ENCODE measurements at regions of chr3 and their contacts with region 1.

Region 1: DNA sequence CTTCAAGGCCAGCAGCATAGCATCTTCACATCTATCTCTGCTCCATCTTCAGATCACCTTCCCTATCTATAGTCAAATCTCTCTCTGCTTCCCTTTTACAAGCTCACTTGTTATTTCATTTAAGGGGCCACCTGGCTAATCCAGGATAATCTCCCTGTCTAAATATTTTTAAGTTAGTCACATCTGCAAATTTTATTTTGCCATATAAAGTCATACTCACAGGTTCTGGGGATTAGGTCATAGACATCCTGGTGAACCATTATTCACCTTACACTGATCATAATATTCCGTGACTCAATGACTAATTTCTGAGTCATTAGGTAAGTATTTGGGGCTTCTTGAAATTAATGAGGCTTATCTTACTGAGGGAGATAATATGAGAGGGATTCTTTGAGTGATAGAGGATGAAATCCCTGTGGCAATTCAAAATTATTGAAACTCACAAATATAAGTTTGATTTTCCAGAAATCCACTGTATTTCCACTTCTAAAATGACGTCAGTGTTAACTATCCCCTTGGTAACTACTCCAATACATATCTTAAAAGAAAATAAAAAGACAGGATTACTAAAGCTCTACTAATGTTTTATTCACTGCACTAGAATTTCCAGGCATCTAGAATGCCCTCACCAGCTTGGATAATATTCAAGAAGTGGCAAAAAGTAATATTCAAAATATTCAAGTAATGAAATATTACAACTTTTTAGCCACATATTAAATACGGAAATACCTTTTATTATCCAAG is 93.7 kb upstream of the RBMS3 start:
- DNase-seq: peak; percentile 99
- ATAC-seq: peak; percentile 79
- H3K4me3 ChIP-seq: no peak overlapping the region; the same call in 1 of the 2 replicates
- H3K27ac ChIP-seq: peak overlapping the region; percentile 98
- H3K4me1 ChIP-seq: peaks cover 45% of the 10 kb centered on the region
- H3K27me3 ChIP-seq: no peaks in the 10 kb centered on the region
- CTCF ChIP-seq: no peak

Region 2: GRCh38 chr3:28951773-28952556 is 235.2 kb before region 1 on chr3:
- CTCF ChIA-PET with region 1: interaction called, 3 read pairs
- POLR2A ChIA-PET with region 1: no interaction called
- intact Hi-C with region 1: loop called (anchors 1 kb)
- DNase-seq: peak; percentile 77
- ATAC-seq: peak; percentile 97
- H3K4me3 ChIP-seq: no peak overlapping the region; the same call in 1 of the 2 replicates
- H3K27ac ChIP-seq: peak overlapping the region; percentile 71
- H3K4me1 ChIP-seq: peaks cover 20% of the 10 kb centered on the region
- H3K27me3 ChIP-seq: no peaks in the 10 kb centered on the region
- CTCF ChIP-seq: no peak

Region 3: DNA sequence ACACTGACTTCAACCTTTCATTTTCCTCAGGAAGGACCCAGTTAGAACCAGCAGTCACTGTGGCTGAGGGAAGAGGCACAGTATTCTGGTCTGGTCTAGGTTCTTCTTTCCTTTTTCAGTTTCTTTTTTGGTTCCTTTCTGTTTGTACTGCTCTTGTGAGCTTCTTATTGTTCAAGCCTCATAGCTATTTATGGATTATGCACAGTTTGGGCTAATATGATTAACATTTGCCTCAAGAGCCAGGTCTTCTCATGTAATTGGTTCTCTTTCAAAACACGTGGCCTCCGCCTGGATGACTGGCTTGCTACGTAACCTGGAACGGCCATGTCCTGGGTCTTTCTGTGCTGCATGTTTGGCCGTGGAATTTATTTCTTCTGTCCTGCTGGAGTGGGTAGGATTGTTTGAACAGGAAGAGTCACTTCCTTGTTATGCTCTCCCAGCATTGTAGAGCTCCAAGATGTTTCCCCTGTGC is 137.1 kb after region 1 on chr3:
- CTCF ChIA-PET with region 1: no interaction called
- POLR2A ChIA-PET with region 1: no interaction called
- intact Hi-C with region 1: loop called (anchors 2 kb)
- DNase-seq: peak; percentile 85
- ATAC-seq: peak; percentile 99
- H3K4me3 ChIP-seq: peak overlapping the region; percentile 31
- H3K27ac ChIP-seq: peak overlapping the region; percentile 80
- H3K4me1 ChIP-seq: peaks cover 22% of the 10 kb centered on the region
- H3K27me3 ChIP-seq: no peaks in the 10 kb centered on the region
- CTCF ChIP-seq: no peak

Region 4: GRCh38 chr3:29486096-29486495 is 298.9 kb after region 1 on chr3:
- CTCF ChIA-PET with region 1: no interaction called
- POLR2A ChIA-PET with region 1: no interaction called
- intact Hi-C with region 1: loop called (anchors 1 kb)
- DNase-seq: peak; percentile 88
- ATAC-seq: peak; percentile 93
- H3K4me3 ChIP-seq: peak overlapping the region; percentile 34; the same call in 1 of the 2 replicates
- H3K27ac ChIP-seq: peak overlapping the region; percentile 92
- H3K4me1 ChIP-seq: peaks cover 33% of the 10 kb centered on the region
- H3K27me3 ChIP-seq: no peaks in the 10 kb centered on the region
- CTCF ChIP-seq: no peak

Region 5: DNA sequence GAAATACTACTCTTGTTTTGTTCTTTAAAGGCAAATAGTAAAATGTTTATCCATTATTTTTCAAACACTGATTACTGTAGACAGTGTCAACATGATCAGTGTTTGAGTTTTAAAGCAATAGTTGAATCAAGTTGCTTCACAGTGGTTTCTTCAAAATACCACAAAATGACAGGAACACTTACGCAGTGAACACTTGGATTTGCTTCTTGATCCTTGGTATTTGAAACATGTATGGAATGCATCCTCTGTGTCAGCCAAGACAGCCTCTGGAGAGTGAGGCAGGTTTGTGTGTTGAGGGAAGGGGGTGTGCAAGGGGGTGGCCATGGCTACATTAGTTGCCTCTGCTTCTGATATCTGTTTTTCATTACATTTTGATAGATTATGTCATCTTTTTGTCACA is 506.7 kb after region 1 on chr3:
- CTCF ChIA-PET with region 1: no interaction called
- POLR2A ChIA-PET with region 1: no interaction called
- intact Hi-C with region 1: loop called (anchors 2 kb)
- DNase-seq: peak; percentile 91
- ATAC-seq: peak; percentile 77
- H3K4me3 ChIP-seq: peak overlapping the region; percentile 13; the same call in 1 of the 2 replicates
- H3K27ac ChIP-seq: peak overlapping the region; percentile 53
- H3K4me1 ChIP-seq: peaks cover 38% of the 10 kb centered on the region
- H3K27me3 ChIP-seq: no peaks in the 10 kb centered on the region
- CTCF ChIP-seq: no peak